ENCODE measurements at regions of chr14 and their contacts with region 1.

Region 1: GRCh38 chr14:74109369-74109768 is 24.6 kb downstream of the LIN52 start:
- DNase-seq: no peak
- H3K4me3 ChIP-seq: no peak overlapping the region
- CTCF ChIP-seq: no peak

Region 2: DNA sequence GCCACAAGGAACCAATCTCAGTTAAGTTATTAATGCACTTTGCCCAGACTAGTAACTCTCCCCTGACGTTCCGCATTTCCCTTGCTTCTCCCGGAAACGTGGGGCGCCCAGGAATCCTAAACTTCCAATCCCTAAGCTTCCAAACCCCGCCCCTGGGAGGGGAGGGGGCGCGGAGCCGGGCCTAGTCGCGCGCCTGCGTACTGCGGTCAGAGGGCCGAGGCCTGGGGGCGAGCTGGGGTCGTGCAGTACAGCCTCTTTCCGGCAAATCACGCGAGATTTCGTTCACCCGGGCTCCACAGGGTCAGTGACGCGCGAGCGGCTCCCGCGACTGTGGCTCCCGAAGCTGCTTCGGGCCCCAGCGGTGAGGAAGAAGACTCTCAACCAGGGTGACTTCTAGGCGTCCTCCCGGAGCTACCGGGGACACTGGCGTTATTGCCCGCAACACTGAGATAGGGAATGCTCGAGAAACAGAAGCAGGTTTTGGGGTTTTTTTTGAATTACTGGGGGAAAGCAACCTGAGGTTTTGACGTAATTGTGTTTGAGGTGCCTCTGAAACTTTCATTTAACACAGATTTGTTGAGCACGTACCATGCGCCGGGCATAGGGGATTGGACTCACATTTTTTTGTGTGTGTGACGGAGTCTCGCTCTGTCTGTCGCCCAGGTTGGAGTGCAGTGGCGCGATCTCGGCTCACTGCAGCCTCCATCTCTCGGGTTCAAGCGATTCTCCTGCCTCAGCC is 257.6 kb before region 1 on chr14 and contains the start of gene PTGR2:
- CTCF ChIA-PET with region 1: no interaction called
- POLR2A ChIA-PET with region 1: no interaction called
- DNase-seq: peak; percentile 73
- H3K4me3 ChIP-seq: peak within 1 kb of the TSS; percentile 67
- CTCF ChIP-seq: no peak

Region 3: DNA sequence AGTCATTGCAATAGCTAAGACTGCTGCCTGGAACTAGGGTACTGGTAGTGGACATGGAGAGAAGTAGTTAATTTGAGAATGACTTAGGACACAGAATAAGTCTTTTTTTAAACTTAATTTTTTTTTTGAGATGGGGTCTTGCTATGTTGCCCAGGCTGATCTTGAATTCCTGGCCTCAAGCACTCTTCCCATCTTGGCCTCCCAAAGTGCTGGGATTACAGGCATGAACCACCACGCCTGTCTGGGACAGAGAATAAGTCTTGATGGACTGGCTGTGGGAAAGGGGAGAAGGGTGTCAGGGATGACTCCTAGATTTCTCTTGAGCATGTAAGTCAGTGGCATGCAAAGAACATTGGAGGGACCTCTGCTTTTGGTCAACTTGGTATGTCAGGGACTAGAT is 18.3 kb after region 1 on chr14:
- CTCF ChIA-PET with region 1: interaction called, 19 read pairs
- POLR2A ChIA-PET with region 1: no interaction called
- DNase-seq: no peak
- H3K4me3 ChIP-seq: no peak overlapping the region
- CTCF ChIP-seq: no peak

Region 4: GRCh38 chr14:74140374-74140850 is 31.0 kb after region 1 on chr14:
- CTCF ChIA-PET with region 1: interaction called, 17 read pairs
- POLR2A ChIA-PET with region 1: no interaction called
- DNase-seq: no peak
- H3K4me3 ChIP-seq: no peak overlapping the region
- CTCF ChIP-seq: no peak

Region 5: GRCh38 chr14:74240794-74241651 is 131.7 kb after region 1 on chr14:
- CTCF ChIA-PET with region 1: interaction called, 150 read pairs
- POLR2A ChIA-PET with region 1: no interaction called
- DNase-seq: no peak
- H3K4me3 ChIP-seq: no peak overlapping the region
- CTCF ChIP-seq: no peak

Region 6: DNA sequence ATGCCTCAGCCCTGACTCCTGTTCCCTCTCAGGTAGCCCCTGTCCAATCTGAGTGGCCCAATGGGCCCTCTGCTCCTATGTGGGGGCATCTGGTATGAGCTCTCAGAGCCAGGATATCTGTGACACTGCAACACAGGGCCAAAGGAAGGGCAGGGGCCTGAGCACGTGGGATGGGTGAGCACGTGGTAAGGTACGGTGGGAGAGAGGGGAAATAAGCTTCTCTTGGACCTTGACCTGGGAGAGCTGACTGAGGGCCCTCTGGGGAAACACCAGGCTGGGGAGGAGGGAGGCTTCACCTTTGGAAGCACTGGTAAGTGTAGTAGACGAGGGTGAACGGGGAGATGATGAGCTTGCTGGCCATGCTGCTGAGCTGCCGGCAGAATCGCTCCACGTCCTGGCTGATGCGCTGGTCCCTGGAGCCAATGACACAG is 186.7 kb after region 1 on chr14:
- CTCF ChIA-PET with region 1: interaction called, 33 read pairs
- POLR2A ChIA-PET with region 1: no interaction called
- DNase-seq: no peak
- H3K4me3 ChIP-seq: no peak overlapping the region
- CTCF ChIP-seq: no peak

Measured in AG04449 (cell line).